HEK293 (cell line): ENCODE measurements at regions of chr17 and their contacts with region 1.

Region 1: GRCh38 chr17:29293890-29294579 is at the start of gene NUFIP2:
- H3K4me3 ChIP-seq: peak within 1 kb of the TSS; percentile 86
- H3K27ac ChIP-seq: peak within 1 kb of the TSS; percentile 99
- H3K4me1 ChIP-seq: peaks cover 11% of the 10 kb centered on the region
- CTCF ChIP-seq: no peak; the same call in 1 of the 2 replicates

Region 2: DNA sequence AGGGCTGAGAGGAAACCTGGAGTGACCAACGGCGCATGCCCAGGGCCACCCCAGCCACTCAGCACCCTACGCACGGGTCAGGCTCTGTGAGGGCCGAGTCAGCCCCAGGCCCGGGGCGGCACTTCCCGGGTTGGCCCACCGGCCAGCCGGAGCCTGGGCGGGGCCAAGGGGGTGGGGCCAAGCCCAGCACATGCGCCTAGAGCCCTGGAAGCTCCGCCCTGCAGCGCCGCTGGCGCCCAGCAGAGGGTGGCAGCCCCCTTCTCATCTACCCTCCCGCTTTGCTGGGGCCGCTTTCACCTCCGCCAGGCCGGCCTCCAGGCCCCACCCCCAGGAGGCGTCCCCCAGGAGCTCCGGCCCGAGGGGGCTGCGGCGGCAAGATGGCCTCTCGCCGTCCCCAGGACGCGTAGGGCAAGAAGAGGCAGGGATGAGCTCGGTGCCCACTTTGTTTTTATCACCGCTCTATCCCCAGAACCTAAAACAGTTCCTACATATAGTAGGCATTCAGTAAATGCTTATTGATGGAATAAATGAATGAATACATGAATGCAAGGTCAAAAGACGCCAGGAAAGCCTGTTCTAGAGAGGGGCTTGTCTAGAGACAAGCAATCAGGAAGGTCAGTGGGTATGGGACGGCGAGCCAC is 145.1 kb before region 1 on chr17:
- CTCF ChIA-PET with region 1: interaction called, 36 read pairs
- POLR2A ChIA-PET with region 1: interaction called, 15 read pairs
- H3K4me3 ChIP-seq: peak overlapping the region; percentile 44
- H3K27ac ChIP-seq: peak overlapping the region; percentile 48
- H3K4me1 ChIP-seq: peaks cover 10% of the 10 kb centered on the region
- CTCF ChIP-seq: peak; percentile 97

Region 3: GRCh38 chr17:29252101-29252866 is 41.8 kb before region 1 on chr17:
- CTCF ChIA-PET with region 1: interaction called, 17 read pairs
- POLR2A ChIA-PET with region 1: interaction called, 13 read pairs
- H3K4me3 ChIP-seq: no peak overlapping the region
- H3K27ac ChIP-seq: no peak overlapping the region
- H3K4me1 ChIP-seq: peaks cover 3% of the 10 kb centered on the region; the same call in 1 of the 2 replicates
- CTCF ChIP-seq: no peak

Region 4: GRCh38 chr17:29341751-29342150 is 47.7 kb after region 1 on chr17:
- CTCF ChIA-PET with region 1: no interaction called
- POLR2A ChIA-PET with region 1: interaction called, 10 read pairs
- H3K4me3 ChIP-seq: no peak overlapping the region
- H3K27ac ChIP-seq: no peak overlapping the region
- H3K4me1 ChIP-seq: no peaks in the 10 kb centered on the region
- CTCF ChIP-seq: no peak

Region 5: GRCh38 chr17:29444589-29444988 is 150.6 kb after region 1 on chr17:
- CTCF ChIA-PET with region 1: no interaction called
- POLR2A ChIA-PET with region 1: no interaction called
- H3K4me3 ChIP-seq: no peak overlapping the region
- H3K27ac ChIP-seq: no peak overlapping the region
- H3K4me1 ChIP-seq: peaks cover 10% of the 10 kb centered on the region
- CTCF ChIP-seq: no peak